OCI-LY7 (cell line): ENCODE measurements at regions of chr17 and their contacts with region 1.

Region 1: DNA sequence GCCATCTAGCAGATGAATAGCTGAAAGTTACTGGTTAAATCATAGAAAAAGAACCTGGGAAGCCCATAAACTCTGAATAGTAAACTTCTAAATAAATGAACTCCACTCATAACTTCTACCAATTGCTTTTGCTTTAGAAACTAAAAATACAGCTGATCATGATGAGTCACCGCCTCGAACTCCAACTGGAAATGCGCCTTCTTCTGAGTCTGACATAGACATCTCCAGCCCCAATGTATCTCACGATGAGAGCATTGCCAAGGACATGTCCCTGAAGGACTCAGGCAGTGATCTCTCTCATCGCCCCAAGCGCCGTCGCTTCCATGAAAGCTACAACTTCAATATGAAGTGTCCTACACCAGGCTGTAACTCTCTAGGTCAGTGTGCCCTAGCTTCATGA is 9.7 kb downstream of the KAT7 start:
- DNase-seq: no peak
- H3K4me3 ChIP-seq: no peak overlapping the region
- H3K27ac ChIP-seq: no peak overlapping the region
- H3K4me1 ChIP-seq: no peaks in the 10 kb centered on the region
- CTCF ChIP-seq: no peak

Region 2: DNA sequence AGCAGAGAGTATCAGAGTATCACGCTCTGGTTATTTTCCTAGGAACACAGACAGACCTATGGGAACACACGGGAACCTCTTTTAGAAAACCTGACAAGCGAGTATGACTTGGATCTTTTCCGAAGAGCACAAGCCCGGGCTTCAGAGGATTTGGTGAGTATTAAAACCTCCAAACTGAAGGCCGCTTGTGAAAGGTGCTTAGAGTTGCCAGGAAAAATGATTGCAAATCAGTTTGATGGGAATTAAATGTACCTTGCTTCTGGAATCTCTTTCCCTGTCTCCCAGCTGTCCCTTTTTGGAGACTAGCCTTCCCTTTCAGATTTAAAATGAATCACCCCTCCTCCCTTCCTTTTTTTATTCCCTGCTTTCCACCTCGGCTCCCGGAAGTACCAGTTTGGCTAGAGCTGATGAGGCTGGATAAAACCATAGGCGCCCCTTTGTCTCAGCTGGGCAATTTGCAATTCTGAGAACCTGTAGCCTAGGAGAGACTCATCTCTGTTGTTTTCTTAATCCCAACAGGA is 17.6 kb after region 1 on chr17:
- CTCF ChIA-PET with region 1: no interaction called
- POLR2A ChIA-PET with region 1: interaction called, 12 read pairs
- intact Hi-C with region 1: no loop called
- DNase-seq: no peak
- H3K4me3 ChIP-seq: no peak overlapping the region
- H3K27ac ChIP-seq: no peak overlapping the region
- H3K4me1 ChIP-seq: no peaks in the 10 kb centered on the region
- CTCF ChIP-seq: no peak

Region 3: DNA sequence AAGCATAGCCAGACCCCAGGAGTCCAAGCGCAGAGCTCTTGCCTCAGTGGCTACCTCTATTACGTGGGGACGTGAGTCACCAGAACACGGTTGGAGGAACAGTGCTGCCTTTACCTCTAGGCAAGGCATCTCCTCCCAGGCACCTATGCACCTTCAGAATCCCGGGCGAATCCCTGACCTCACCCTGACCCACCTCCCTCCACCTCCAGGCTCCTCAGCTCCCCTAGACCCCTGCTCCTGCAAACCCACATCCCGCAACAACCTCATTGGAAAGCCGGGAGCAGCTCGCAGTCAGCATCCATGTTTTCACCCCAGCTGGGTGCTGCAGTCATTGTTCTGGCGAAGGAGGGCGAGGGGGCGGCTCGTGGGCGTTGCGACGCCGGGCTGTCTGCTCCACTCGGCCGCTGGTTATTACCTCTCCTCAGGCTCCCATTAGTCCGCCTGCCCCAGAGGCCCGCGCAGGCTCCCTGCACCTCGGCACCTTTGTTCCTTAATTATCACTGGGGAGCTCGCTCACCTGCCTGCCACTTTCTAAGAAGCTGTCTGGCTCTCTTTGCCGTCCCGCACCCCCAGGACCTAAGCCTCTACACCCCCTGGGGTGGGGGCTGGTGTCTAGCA is 146.2 kb after region 1 on chr17:
- CTCF ChIA-PET with region 1: no interaction called
- POLR2A ChIA-PET with region 1: no interaction called
- intact Hi-C with region 1: no loop called
- DNase-seq: no peak
- H3K4me3 ChIP-seq: no peak overlapping the region
- H3K27ac ChIP-seq: no peak overlapping the region
- H3K4me1 ChIP-seq: no peaks in the 10 kb centered on the region
- CTCF ChIP-seq: no peak